Left colon (tissue), 2 donors: ENCODE measurements at regions of chr16 and their contacts with region 1.

Region 1: GRCh38 chr16:84062734-84063640 is 20.4 kb upstream of the SLC38A8 start:
- DNase-seq: peak; percentile 43 to 73
- ATAC-seq: peak; percentile 88

Region 2: GRCh38 chr16:83826146-83826913 is 236.7 kb before region 1 on chr16:
- intact Hi-C with region 1: loop called in 1 of 2 experiments (anchors 10 kb)
- DNase-seq: peak; percentile 71 to 88
- ATAC-seq: peak; percentile 96

Region 3: GRCh38 chr16:83967806-83968305 is 95.1 kb before region 1 on chr16 and contains the start of gene NECAB2:
- intact Hi-C with region 1: loop called (anchors 10 kb)
- DNase-seq: peak in 1 of 2 donors; percentile 56
- ATAC-seq: peak; percentile 70
- total RNA-seq, gene NECAB2: 0.24 to 1.0 TPM